Panc1 (cell line): ENCODE measurements at regions of chr2 and their contacts with region 1.

Region 1: GRCh38 chr2:197236816-197237215 is 73.8 kb downstream of the ANKRD44 start:
- DNase-seq: no peak
- ATAC-seq: no peak
- H3K4me3 ChIP-seq: no peak overlapping the region
- H3K27ac ChIP-seq: no peak overlapping the region
- H3K4me1 ChIP-seq: no peaks in the 10 kb centered on the region; the same call in 1 of the 2 replicates
- H3K27me3 ChIP-seq: no peaks in the 10 kb centered on the region
- CTCF ChIP-seq: no peak

Region 2: GRCh38 chr2:196961889-196962288 is 274.9 kb before region 1 on chr2:
- CTCF ChIA-PET with region 1: no interaction called
- POLR2A ChIA-PET with region 1: no interaction called
- in situ Hi-C with region 1: no loop called
- intact Hi-C with region 1: no loop called
- DNase-seq: no peak
- ATAC-seq: no peak
- H3K4me3 ChIP-seq: no peak overlapping the region
- H3K27ac ChIP-seq: no peak overlapping the region
- H3K4me1 ChIP-seq: no peaks in the 10 kb centered on the region
- H3K27me3 ChIP-seq: no peaks in the 10 kb centered on the region
- CTCF ChIP-seq: no peak

Region 3: GRCh38 chr2:197268786-197269584 is 32.2 kb after region 1 on chr2:
- CTCF ChIA-PET with region 1: no interaction called
- POLR2A ChIA-PET with region 1: no interaction called
- in situ Hi-C with region 1: no loop called
- intact Hi-C with region 1: loop called (anchors 1 kb)
- DNase-seq: no peak
- ATAC-seq: no peak
- H3K4me3 ChIP-seq: no peak overlapping the region
- H3K27ac ChIP-seq: no peak overlapping the region
- H3K4me1 ChIP-seq: no peaks in the 10 kb centered on the region; the same call in 1 of the 2 replicates
- H3K27me3 ChIP-seq: no peaks in the 10 kb centered on the region
- CTCF ChIP-seq: no peak

Region 4: DNA sequence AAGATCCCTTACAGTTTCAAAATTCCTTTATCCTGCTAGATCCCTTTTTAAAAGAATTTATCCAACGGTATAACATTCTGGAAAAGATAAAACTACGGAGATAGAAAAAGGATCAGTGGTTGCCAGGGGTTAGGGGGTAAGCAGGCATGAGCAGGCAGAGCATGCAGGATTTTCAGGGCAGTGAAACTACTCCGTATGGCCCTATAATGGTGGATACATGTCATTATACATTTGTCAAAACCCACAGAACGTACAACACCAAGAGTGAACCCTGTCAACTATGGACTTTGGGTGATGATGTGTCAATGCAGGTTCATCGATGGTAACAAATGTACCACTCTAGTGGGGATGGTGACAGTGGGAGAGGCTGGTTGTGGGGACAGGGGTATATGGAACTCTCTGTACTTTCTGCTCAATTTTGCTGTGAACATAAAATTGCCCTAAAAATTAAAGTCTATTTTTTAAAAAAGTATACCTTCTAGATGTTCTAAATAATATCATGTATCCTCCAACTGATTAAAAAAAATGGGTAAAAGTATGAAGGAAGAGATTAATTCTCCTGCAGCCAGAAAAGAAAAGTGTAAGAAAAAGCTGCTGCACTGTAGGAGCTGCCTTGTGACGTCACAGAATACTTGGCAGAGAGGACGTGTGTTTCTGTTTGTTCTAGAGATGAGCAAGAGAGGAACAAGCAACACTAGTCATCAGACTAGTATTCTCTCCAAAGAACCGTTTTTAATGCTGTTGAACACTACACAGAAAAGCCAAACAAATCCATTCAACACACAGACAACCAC is 50.2 kb after region 1 on chr2:
- CTCF ChIA-PET with region 1: no interaction called
- POLR2A ChIA-PET with region 1: no interaction called
- in situ Hi-C with region 1: no loop called
- intact Hi-C with region 1: no loop called
- DNase-seq: peak; percentile 90
- ATAC-seq: peak; percentile 100
- H3K4me3 ChIP-seq: peak overlapping the region in 1 of 2 experiments; percentile 36; a peak in 3 of 4 replicates
- H3K27ac ChIP-seq: peak overlapping the region; percentile 64
- H3K4me1 ChIP-seq: peaks cover 22% of the 10 kb centered on the region
- H3K27me3 ChIP-seq: no peaks in the 10 kb centered on the region
- CTCF ChIP-seq: no peak